B cell (primary cell): ENCODE measurements at regions of chr16 and their contacts with region 1.

Region 1: DNA sequence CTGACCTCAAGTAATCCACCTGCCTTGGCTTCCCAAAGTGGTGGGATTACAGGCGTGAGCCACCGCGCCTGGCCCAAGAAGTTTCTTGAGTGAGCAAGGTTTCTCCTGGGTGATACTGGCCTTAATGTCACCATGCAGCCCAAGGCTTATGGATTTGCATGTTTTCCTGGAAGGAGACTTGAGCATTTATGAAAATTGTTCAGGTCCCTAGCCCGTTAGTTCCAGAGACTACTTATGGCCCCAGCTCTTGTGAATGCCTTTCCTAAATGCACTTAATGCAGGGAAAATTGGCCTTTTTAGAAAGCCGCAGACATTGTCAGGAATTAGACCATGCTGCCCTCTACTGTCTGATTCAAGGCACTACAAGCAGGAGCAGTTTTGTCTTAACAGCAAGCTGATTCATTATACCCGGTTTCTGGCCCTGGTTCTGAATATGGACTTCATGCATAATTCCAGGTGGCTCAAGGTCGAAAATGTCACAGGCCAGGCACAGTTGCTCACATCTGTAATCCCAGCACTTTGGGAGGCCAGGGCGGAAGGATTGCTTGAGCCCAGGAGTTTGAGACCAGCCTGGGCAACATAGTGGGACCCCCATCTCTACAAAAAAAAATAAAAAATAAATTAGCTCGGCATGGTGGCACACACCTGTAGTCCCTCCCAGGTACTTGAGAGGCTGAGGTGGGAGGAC is 91.3 kb downstream of the SNX29 start:
- DNase-seq: peak; percentile 84
- ATAC-seq: peak; percentile 91
- H3K4me3 ChIP-seq: no peak overlapping the region
- H3K4me3 Mint-ChIP-seq: no peak overlapping the region
- H3K27ac ChIP-seq: no peak overlapping the region
- H3K27ac Mint-ChIP-seq: peak overlapping the region; percentile 61
- H3K4me1 ChIP-seq: peaks cover 0 to 4% of the 10 kb centered on the region in 2 donors
- H3K4me1 Mint-ChIP-seq: peaks cover 21% of the 10 kb centered on the region
- H3K27me3 ChIP-seq: no peaks in the 10 kb centered on the region
- H3K27me3 Mint-ChIP-seq: no peaks in the 10 kb centered on the region
- CTCF ChIP-seq: peak; percentile 94

Region 2: GRCh38 chr16:11915644-11916523 is 152.0 kb before region 1 on chr16 and contains the start of gene GSPT1:
- CTCF ChIA-PET with region 1: interaction called, 10 read pairs
- POLR2A ChIA-PET with region 1: interaction called, 3 read pairs
- intact Hi-C with region 1: no loop called
- DNase-seq: peak; percentile 99
- ATAC-seq: peak; percentile 93
- H3K4me3 ChIP-seq: peak within 1 kb of the TSS; percentile 65 to 78 (median 76)
- H3K4me3 Mint-ChIP-seq: peak within 1 kb of the TSS; percentile 91
- H3K27ac ChIP-seq: peak within 1 kb of the TSS; percentile 72 to 82
- H3K27ac Mint-ChIP-seq: peak within 1 kb of the TSS; percentile 95
- H3K4me1 ChIP-seq: peaks cover 29 to 31% of the 10 kb centered on the region in 2 donors
- H3K4me1 Mint-ChIP-seq: peaks cover 32% of the 10 kb centered on the region
- H3K27me3 ChIP-seq: peaks cover 0 to 4% (median 0%) of the 10 kb centered on the region in 4 experiments
- H3K27me3 Mint-ChIP-seq: peaks cover 11% of the 10 kb centered on the region
- CTCF ChIP-seq: no peak
- total RNA-seq, gene GSPT1: 72.6 and 77.0 TPM in 2 replicates

Region 3: DNA sequence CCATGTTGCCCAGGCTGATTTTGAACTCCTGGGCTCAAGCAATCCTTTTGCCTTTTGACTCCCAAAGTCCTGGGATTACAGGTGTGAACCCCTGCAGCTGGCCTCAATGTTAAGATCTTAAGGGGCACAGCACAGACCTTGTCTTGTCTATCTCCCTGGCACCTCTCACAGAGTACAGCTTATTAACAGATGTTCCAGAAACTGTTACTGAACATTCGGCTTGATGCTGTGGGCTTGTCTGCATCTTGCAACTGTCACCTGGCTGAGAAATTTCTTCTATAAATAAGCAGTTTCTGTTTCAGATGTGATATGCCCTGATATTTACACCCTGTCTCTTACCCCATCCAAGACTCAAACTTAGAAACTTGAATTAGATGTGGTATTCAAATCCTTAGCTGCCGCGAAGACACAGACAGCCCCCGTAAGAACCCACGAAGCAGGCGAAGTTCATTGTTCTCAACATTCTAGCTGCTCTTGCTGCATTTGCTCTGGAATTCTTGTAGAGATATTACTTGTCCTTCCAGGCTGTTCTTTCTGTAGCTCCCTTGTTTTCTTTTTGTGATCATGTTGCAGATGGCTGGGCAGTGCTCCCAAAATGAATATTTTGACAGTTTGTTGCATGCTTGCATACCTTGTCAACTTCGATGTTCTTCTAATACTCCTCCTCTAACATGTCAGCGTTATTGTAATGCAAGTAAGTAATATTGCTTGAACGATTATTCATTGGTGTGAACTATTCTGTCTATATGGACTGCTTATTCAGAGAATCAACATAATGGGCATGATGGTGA is 102.9 kb before region 1 on chr16 and contains the start of gene TNFRSF17:
- CTCF ChIA-PET with region 1: interaction called, 44 read pairs
- POLR2A ChIA-PET with region 1: no interaction called
- intact Hi-C with region 1: loop called (anchors 5 kb)
- DNase-seq: peak; percentile 58
- ATAC-seq: peak; percentile 69
- H3K4me3 ChIP-seq: peak within 1 kb of the TSS in 4 of 5 experiments; percentile 25 to 65 (median 51)
- H3K4me3 Mint-ChIP-seq: peak within 1 kb of the TSS; percentile 87
- H3K27ac ChIP-seq: peak within 1 kb of the TSS; percentile 85 to 86
- H3K27ac Mint-ChIP-seq: peak within 1 kb of the TSS; percentile 97
- H3K4me1 ChIP-seq: peaks cover 51 to 83% of the 10 kb centered on the region in 2 donors
- H3K4me1 Mint-ChIP-seq: peaks cover 60% of the 10 kb centered on the region
- H3K27me3 ChIP-seq: no peaks in the 10 kb centered on the region
- H3K27me3 Mint-ChIP-seq: no peaks in the 10 kb centered on the region
- CTCF ChIP-seq: no peak
- total RNA-seq, gene TNFRSF17: 4.6 and 6.3 TPM in 2 replicates

Region 4: DNA sequence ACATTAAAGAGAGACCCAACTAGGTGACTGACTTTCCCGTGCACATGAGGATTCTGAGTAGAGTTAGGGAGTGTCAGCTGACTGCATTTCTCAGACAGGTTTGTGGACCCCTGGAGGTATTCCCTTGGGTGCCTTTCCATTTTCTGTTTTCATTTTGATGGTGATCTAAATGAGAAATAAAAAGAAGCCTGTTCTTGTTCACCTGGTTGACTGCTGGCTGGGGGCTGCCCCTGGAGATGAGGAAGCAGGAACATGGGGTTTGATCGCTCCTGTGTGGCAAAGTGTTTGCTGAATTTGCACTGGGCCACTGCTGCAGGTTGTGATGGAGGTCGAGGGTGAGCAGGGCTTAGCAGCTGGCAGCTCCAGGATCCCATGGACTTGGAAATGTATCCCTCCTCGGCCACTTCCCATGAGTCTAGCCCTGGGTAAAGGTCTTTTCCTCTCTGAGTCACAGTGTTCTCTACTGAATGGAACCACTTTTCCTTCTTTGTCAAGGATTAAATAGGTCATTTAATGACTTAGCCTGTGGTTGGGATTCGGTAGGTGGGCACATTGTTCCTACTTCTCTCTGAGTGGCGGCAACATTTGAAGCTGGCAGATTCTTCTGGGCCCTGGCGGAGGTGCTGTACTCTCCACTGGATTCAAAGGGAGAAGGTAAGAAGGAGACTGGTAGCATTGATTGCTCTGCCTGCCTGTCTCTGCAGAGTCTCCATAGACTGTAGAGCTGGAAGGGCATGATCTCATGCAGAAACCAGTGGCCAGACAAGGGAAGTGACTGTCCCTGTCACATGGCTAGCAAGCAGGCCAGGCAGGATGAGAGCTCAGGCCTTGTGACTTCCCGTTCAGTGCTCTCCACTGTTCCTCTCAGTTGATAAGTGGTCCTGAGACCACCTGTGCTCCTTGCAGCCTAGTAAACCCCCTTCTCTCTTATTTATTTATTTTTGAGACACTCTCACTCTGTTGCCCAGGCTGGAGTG is 73.4 kb before region 1 on chr16:
- CTCF ChIA-PET with region 1: interaction called, 12 read pairs
- POLR2A ChIA-PET with region 1: no interaction called
- intact Hi-C with region 1: no loop called
- DNase-seq: peak; percentile 52
- ATAC-seq: peak; percentile 57
- H3K4me3 ChIP-seq: no peak overlapping the region
- H3K4me3 Mint-ChIP-seq: peak overlapping the region; percentile 8
- H3K27ac ChIP-seq: peak overlapping the region; percentile 27 to 56
- H3K27ac Mint-ChIP-seq: peak overlapping the region; percentile 82
- H3K4me1 ChIP-seq: peaks cover 53 to 66% of the 10 kb centered on the region in 2 donors
- H3K4me1 Mint-ChIP-seq: peaks cover 78% of the 10 kb centered on the region
- H3K27me3 ChIP-seq: no peaks in the 10 kb centered on the region
- H3K27me3 Mint-ChIP-seq: no peaks in the 10 kb centered on the region
- CTCF ChIP-seq: no peak

Region 5: GRCh38 chr16:12026741-12027490 is 40.9 kb before region 1 on chr16:
- CTCF ChIA-PET with region 1: interaction called, 33 read pairs
- POLR2A ChIA-PET with region 1: no interaction called
- intact Hi-C with region 1: no loop called
- DNase-seq: peak; percentile 33
- ATAC-seq: peak; percentile 39
- H3K4me3 ChIP-seq: no peak overlapping the region
- H3K4me3 Mint-ChIP-seq: no peak overlapping the region
- H3K27ac ChIP-seq: peak overlapping the region; percentile 16 to 59
- H3K27ac Mint-ChIP-seq: peak overlapping the region; percentile 70
- H3K4me1 ChIP-seq: peaks cover 44 to 58% of the 10 kb centered on the region in 2 donors
- H3K4me1 Mint-ChIP-seq: peaks cover 64% of the 10 kb centered on the region
- H3K27me3 ChIP-seq: no peaks in the 10 kb centered on the region
- H3K27me3 Mint-ChIP-seq: no peaks in the 10 kb centered on the region
- CTCF ChIP-seq: no peak

Region 6: GRCh38 chr16:12095275-12096156 is 27.7 kb after region 1 on chr16:
- CTCF ChIA-PET with region 1: interaction called, 23 read pairs
- POLR2A ChIA-PET with region 1: no interaction called
- intact Hi-C with region 1: no loop called
- DNase-seq: peak; percentile 73
- ATAC-seq: peak; percentile 28
- H3K4me3 ChIP-seq: no peak overlapping the region
- H3K4me3 Mint-ChIP-seq: peak overlapping the region; percentile 57
- H3K27ac ChIP-seq: no peak overlapping the region
- H3K27ac Mint-ChIP-seq: no peak overlapping the region
- H3K4me1 ChIP-seq: peaks cover 6 to 8% of the 10 kb centered on the region in 2 donors
- H3K4me1 Mint-ChIP-seq: peaks cover 25% of the 10 kb centered on the region
- H3K27me3 ChIP-seq: no peaks in the 10 kb centered on the region
- H3K27me3 Mint-ChIP-seq: no peaks in the 10 kb centered on the region
- CTCF ChIP-seq: peak; percentile 96

Region 7: GRCh38 chr16:12868169-12868568 is 800.3 kb after region 1 on chr16:
- CTCF ChIA-PET with region 1: no interaction called
- POLR2A ChIA-PET with region 1: no interaction called
- intact Hi-C with region 1: no loop called
- DNase-seq: no peak
- ATAC-seq: no peak
- H3K4me3 ChIP-seq: no peak overlapping the region
- H3K4me3 Mint-ChIP-seq: no peak overlapping the region
- H3K27ac ChIP-seq: no peak overlapping the region
- H3K27ac Mint-ChIP-seq: no peak overlapping the region
- H3K4me1 ChIP-seq: peaks cover 0 to 7% of the 10 kb centered on the region in 2 donors
- H3K4me1 Mint-ChIP-seq: peaks cover 13% of the 10 kb centered on the region
- H3K27me3 ChIP-seq: no peaks in the 10 kb centered on the region
- H3K27me3 Mint-ChIP-seq: peaks cover 4% of the 10 kb centered on the region
- CTCF ChIP-seq: no peak